ENCODE measurements at regions of chr10 and their contacts with region 1.

Region 1: GRCh38 chr10:98242823-98243222 is 25.2 kb downstream of the LOXL4 start:
- DNase-seq: no peak
- H3K4me3 ChIP-seq: no peak overlapping the region
- H3K27ac ChIP-seq: peak overlapping the region in 1 of 4 donors; percentile 73
- H3K4me1 ChIP-seq: peaks cover 0 to 53% (median 31%) of the 10 kb centered on the region in 4 donors
- H3K27me3 ChIP-seq: no peaks in the 10 kb centered on the region
- CTCF ChIP-seq: peak; percentile 20 to 56 (median 32)
- EP300 ChIP-seq: no peak
- POLR2A ChIP-seq: no peak

Region 2: DNA sequence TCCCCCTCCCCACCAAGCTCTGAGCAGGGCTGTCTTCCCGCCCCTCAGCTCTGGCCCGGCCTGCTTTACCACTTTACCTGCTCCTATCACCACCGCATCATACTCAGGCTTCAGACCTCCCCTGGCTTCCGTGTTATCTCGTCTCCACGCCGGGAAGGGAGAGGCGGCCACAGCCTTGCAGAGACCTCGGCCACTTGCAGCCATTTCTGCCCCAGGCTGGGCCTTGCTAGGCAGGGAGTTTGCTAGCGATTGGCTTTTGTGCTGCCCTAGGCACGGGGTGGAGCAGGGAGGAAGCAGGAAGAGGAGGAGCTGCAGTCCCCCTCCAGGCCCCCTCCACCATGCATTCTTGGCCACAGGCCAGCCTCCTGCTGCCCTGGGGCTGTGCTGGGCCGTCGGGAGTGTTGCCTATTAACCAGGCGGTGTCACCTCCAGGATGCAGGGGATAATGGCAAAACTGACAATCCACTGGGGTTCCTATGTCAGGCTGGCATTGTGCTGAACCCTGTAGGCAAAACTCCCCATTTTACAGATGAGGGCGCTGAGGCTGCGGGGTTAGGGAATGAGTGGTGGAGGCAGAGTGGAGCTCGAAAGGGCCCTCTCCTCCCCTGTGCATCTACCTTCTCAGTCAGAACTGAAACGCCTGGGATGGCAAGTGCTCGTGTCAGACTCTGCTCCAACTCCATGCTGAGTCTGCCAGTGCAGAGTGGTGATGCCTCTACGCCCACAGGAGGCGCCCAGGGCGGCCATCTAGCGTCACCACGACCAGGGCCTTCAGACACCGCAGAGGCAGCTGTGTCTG is 172.3 kb after region 1 on chr10 and contains the start of gene PYROXD2:
- intact Hi-C with region 1: loop called (anchors 10 kb)
- DNase-seq: peak; percentile 97
- H3K4me3 ChIP-seq: peak within 1 kb of the TSS; percentile 41 to 68 (median 64)
- H3K27ac ChIP-seq: peak within 1 kb of the TSS; percentile 83 to 86 (median 84)
- H3K4me1 ChIP-seq: peaks cover 0 to 29% (median 20%) of the 10 kb centered on the region in 4 donors
- H3K27me3 ChIP-seq: no peaks in the 10 kb centered on the region
- CTCF ChIP-seq: no peak
- EP300 ChIP-seq: no peak
- POLR2A ChIP-seq: peak; percentile 58 to 65
- total RNA-seq, gene PYROXD2: 4.4 to 11.9 (median 9.7) TPM

Region 3: GRCh38 chr10:99248824-99249223 is 1006.0 kb after region 1 on chr10:
- intact Hi-C with region 1: loop called (anchors 10 kb)
- DNase-seq: no peak
- H3K4me3 ChIP-seq: no peak overlapping the region
- H3K27ac ChIP-seq: no peak overlapping the region
- H3K4me1 ChIP-seq: no peaks in the 10 kb centered on the region
- H3K27me3 ChIP-seq: no peaks in the 10 kb centered on the region
- CTCF ChIP-seq: no peak
- EP300 ChIP-seq: no peak
- POLR2A ChIP-seq: no peak

Measured in sigmoid colon (tissue), 7 donors.